Naive thymus-derived CD4-positive, alpha-beta T cell (primary cell): ENCODE measurements at regions of chr5 and their contacts with region 1.

Region 1: DNA sequence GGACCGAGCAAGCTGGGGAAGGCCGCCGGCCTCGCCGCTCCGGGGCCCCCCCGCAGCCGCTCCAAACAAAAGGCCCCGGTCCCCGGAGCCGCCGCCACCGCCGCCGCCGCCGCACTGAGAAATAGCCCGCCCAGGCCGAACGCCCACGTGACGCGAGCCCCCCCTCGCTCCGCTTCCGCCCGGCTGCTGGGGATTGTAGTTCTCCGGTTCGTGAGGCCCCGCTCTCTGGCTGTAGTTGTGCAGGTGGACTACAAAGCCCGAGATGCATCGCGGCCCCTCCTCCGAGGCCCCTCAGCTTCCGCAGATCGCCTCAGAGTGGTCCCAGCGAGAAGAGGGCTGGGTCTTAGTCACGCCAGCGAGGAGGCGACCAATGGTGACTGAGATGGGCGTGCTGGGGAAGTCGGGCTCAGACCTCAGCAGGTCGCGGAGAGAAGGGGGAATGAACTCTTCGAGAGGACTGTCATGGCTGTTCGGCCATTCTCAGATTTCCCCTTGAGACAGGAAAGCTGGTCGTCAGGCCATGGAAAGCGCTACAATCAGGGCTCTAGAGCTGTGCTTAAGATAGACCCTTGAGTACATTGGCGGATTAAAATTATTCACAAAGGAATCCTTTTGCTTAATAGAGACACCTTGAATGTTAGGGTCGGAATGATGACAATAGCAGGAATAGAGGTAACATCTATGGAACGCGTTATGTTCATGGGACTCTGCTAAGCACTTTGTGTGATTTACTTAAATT is 489 bp upstream of the PANK3 start:
- DNase-seq: peak; percentile 90 to 96 (median 95)
- ATAC-seq: peak; percentile 98
- H3K4me3 ChIP-seq: peak overlapping the region; percentile 79
- H3K4me3 Mint-ChIP-seq: peak overlapping the region; percentile 88 to 100 (median 94)
- H3K27ac ChIP-seq: peak overlapping the region; percentile 83
- H3K27ac Mint-ChIP-seq: peak overlapping the region; percentile 87 to 100 (median 97)
- H3K4me1 ChIP-seq: peaks cover 0 to 16% of the 10 kb centered on the region in 2 donors
- H3K4me1 Mint-ChIP-seq: peaks cover 19 to 48% (median 44%) of the 10 kb centered on the region in 7 donors
- H3K27me3 ChIP-seq: no peaks in the 10 kb centered on the region
- H3K27me3 Mint-ChIP-seq: peaks cover 0 to 4% (median 0%) of the 10 kb centered on the region in 5 donors

Region 2: DNA sequence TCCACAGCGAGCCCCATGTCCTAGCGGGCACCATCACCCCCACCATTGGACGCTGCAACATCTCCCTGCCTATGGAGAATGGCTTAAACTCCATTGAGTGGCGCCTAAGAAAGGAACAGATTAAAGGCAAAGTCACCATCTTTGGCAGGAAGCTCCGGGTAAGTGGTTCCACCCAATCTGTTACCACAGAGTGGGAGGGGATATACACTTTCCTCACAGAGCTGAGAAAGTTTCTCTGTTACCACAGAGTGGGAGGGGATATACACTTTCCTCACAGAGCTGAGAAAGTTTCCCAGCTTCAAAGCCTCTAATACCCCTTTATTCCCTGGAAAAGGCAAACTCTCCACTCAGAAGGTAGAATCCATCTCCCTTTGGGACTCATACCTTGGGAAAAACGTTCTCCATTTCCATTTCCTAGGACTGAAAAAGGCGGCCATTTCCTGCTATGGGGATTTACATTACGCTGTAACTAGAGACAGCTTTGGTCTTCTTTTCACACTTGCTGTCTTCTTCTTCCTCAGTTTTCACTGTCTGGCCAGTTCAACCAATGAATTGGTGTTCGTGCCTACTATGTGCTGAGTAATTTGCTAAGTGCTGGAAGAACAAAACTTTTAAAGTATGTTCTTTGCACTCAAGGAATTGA is 351.6 kb before region 1 on chr5:
- CTCF ChIA-PET with region 1: no interaction called
- POLR2A ChIA-PET with region 1: no interaction called
- intact Hi-C with region 1: loop called (anchors 1 to 5 kb)
- DNase-seq: peak in 5 of 9 donors; percentile 26 to 51 (median 45)
- ATAC-seq: peak; percentile 97
- H3K4me3 ChIP-seq: no peak overlapping the region
- H3K4me3 Mint-ChIP-seq: peak overlapping the region in 7 of 10 donors; percentile 17 to 68 (median 58)
- H3K27ac ChIP-seq: peak overlapping the region; percentile 46
- H3K27ac Mint-ChIP-seq: peak overlapping the region in 4 of 9 donors; percentile 3 to 75 (median 62)
- H3K4me1 ChIP-seq: peaks cover 0 to 3% of the 10 kb centered on the region in 2 donors
- H3K4me1 Mint-ChIP-seq: peaks cover 0 to 31% (median 23%) of the 10 kb centered on the region in 7 donors
- H3K27me3 ChIP-seq: no peaks in the 10 kb centered on the region
- H3K27me3 Mint-ChIP-seq: peaks cover 0 to 19% (median 10%) of the 10 kb centered on the region in 5 donors

Region 3: DNA sequence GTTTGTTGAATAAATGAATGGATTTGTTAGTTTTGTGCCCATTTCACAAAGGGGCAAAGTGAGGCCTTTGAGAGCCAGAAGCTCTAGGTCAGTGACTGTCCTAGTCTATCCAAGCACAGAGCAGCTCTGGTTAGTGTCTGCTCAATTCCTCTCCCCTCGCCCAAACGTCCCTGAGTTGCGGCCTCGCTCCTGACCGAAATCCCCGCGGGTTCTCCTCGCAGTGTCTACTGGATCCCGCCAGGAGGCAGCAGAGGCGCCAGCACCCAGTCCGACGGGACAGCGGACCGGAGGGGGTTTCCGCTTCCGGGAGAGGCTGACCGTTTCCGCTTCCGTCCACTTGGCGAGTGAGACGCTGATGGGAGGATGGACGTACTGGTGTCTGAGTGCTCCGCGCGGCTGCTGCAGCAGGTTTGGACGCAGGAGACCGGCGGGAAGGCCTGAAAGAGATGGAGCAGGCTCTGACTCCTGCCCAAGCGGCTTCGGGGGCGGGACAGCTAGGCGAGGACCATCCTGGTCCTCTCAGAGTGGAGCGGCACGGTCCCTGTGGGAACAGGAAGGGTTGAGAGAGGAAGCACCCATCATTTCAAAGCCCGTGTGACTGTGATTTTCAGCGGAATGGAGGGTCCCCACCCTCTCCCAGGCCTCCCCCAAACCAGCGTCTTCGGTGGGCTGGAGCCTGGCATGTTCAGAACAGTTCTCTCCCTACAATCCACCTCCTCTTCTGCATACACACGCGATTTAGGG is 93.3 kb before region 1 on chr5 and contains the start of gene RARS1:
- CTCF ChIA-PET with region 1: no interaction called
- POLR2A ChIA-PET with region 1: interaction called, 16 read pairs
- intact Hi-C with region 1: loop called (anchors 1 kb)
- DNase-seq: peak; percentile 65 to 89 (median 76)
- ATAC-seq: peak; percentile 98
- H3K4me3 ChIP-seq: peak within 1 kb of the TSS; percentile 93
- H3K4me3 Mint-ChIP-seq: peak within 1 kb of the TSS; percentile 96 to 100 (median 99)
- H3K27ac ChIP-seq: peak within 1 kb of the TSS; percentile 73
- H3K27ac Mint-ChIP-seq: peak within 1 kb of the TSS; percentile 88 to 96 (median 92)
- H3K4me1 ChIP-seq: peaks cover 7% of the 10 kb centered on the region in 2 donors
- H3K4me1 Mint-ChIP-seq: peaks cover 30 to 52% (median 44%) of the 10 kb centered on the region in 7 donors
- H3K27me3 ChIP-seq: no peaks in the 10 kb centered on the region
- H3K27me3 Mint-ChIP-seq: peaks cover 0 to 3% (median 0%) of the 10 kb centered on the region in 5 donors
- total RNA-seq, gene RARS1: 59.1 to 110 (median 81.3) TPM

Region 4: DNA sequence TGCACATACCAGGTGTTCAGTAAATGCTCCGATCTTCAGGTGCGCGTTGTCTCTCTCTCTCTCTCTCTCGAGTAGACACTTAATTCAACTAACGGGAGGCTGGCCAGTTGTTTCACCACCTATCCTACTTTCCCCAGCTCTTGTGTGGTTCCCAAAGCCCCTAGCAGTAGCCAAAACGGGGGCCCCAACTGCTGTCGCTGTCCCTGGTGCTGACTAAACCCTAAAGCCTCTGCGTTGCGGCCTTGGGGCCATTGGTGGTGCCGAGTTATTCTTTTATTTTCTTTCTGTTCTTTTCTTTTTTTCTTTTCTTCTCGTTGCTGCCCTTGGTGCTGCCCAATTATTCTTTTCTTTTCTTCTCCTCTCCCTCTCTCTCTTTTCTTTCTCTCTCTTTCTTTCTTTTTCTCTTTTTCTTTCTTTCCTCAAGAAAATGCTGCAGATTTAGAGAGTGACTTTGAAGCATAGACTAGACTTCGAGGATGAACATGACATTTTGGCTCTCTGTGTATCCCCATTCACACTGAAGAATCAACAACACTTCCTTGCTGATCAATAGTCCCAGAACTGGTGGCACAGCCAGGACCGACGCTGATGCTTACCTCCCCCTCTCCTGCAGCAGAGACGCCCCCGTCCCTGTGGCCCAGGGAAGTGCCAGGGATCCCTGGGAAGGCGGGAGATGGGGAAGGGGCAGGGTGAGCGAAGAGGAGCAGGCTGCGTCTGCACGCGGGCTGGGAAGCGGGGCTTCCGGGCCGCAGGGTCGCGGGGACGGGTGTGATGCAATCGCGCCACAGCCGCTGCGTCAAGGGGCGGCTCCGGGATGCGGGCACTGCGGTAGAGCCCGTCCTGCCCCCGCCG is 50.9 kb before region 1 on chr5 and contains the start of gene FBLL1:
- CTCF ChIA-PET with region 1: no interaction called
- POLR2A ChIA-PET with region 1: no interaction called
- intact Hi-C with region 1: loop called in 1 of 2 experiments (anchors 2 kb)
- DNase-seq: peak in 4 of 9 donors; percentile 1 to 35 (median 14)
- ATAC-seq: no peak
- H3K4me3 ChIP-seq: peak within 1 kb of the TSS; percentile 47
- H3K4me3 Mint-ChIP-seq: peak within 1 kb of the TSS; percentile 59 to 88 (median 72)
- H3K27ac ChIP-seq: no peak within 1 kb of the TSS
- H3K27ac Mint-ChIP-seq: peak within 1 kb of the TSS in 2 of 9 donors; percentile 22 to 38
- H3K4me1 ChIP-seq: no peaks in the 10 kb centered on the region
- H3K4me1 Mint-ChIP-seq: peaks cover 4 to 18% (median 14%) of the 10 kb centered on the region in 7 donors
- H3K27me3 ChIP-seq: peaks cover 0 to 18% of the 10 kb centered on the region in 2 donors
- H3K27me3 Mint-ChIP-seq: peaks cover 26 to 50% (median 42%) of the 10 kb centered on the region in 5 donors
- total RNA-seq, gene FBLL1: 0.22 to 0.57 TPM in 2 of 5 experiments, not detected in the others

Region 5: GRCh38 chr5:168654211-168654721 is 74.6 kb after region 1 on chr5:
- CTCF ChIA-PET with region 1: no interaction called
- POLR2A ChIA-PET with region 1: no interaction called
- intact Hi-C with region 1: no loop called
- DNase-seq: no peak
- ATAC-seq: no peak
- H3K4me3 ChIP-seq: no peak overlapping the region
- H3K4me3 Mint-ChIP-seq: no peak overlapping the region
- H3K27ac ChIP-seq: no peak overlapping the region
- H3K27ac Mint-ChIP-seq: peak overlapping the region in 1 of 9 donors; percentile 23
- H3K4me1 ChIP-seq: no peaks in the 10 kb centered on the region
- H3K4me1 Mint-ChIP-seq: no peaks in the 10 kb centered on the region
- H3K27me3 ChIP-seq: no peaks in the 10 kb centered on the region
- H3K27me3 Mint-ChIP-seq: peaks cover 0 to 6% (median 4%) of the 10 kb centered on the region in 5 donors

Region 6: GRCh38 chr5:168679515-168679920 is 99.9 kb after region 1 on chr5:
- CTCF ChIA-PET with region 1: no interaction called
- POLR2A ChIA-PET with region 1: interaction called, 5 read pairs
- intact Hi-C with region 1: loop called in 1 of 2 experiments (anchors 5 kb)
- DNase-seq: peak; percentile 11 to 59 (median 47)
- ATAC-seq: peak; percentile 55
- H3K4me3 ChIP-seq: no peak overlapping the region
- H3K4me3 Mint-ChIP-seq: no peak overlapping the region
- H3K27ac ChIP-seq: no peak overlapping the region
- H3K27ac Mint-ChIP-seq: no peak overlapping the region
- H3K4me1 ChIP-seq: peaks cover 0 to 5% of the 10 kb centered on the region in 2 donors
- H3K4me1 Mint-ChIP-seq: peaks cover 6 to 20% (median 14%) of the 10 kb centered on the region in 7 donors
- H3K27me3 ChIP-seq: no peaks in the 10 kb centered on the region
- H3K27me3 Mint-ChIP-seq: peaks cover 0 to 6% (median 0%) of the 10 kb centered on the region in 5 donors

Region 7: DNA sequence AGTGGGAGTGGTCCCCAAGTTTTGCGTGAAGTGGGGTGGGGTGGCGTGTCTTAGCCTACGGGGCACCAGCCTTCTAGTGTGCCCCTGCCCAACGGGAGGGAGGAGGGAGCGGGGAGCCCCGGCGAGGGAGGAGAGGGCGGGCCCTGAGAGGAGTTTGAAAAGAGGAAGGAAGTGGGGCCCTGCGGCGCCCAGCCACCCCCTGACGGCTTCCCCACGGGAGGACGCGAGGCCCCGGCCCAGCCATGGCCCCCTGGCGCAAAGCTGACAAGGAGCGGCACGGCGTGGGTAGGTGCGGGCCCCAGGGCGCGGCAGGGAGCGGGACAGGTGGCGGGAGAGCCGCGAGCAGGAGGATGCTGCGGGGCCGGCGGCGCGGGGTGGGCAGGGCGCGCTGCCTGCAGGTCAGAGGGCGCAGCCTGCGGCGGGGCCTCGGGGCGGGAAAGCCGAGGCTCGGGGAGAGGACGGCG is 1057.5 kb after region 1 on chr5 and contains the start of gene DOCK2:
- CTCF ChIA-PET with region 1: no interaction called
- POLR2A ChIA-PET with region 1: interaction called, 4 read pairs
- intact Hi-C with region 1: loop called (anchors 1 kb)
- DNase-seq: peak; percentile 54 to 72 (median 62)
- ATAC-seq: peak; percentile 88
- H3K4me3 ChIP-seq: peak within 1 kb of the TSS; percentile 97
- H3K4me3 Mint-ChIP-seq: peak within 1 kb of the TSS; percentile 91 to 95 (median 94)
- H3K27ac ChIP-seq: peak within 1 kb of the TSS; percentile 75
- H3K27ac Mint-ChIP-seq: peak within 1 kb of the TSS; percentile 88 to 98 (median 94)
- H3K4me1 ChIP-seq: peaks cover 19 to 38% of the 10 kb centered on the region in 2 donors
- H3K4me1 Mint-ChIP-seq: peaks cover 38 to 56% (median 48%) of the 10 kb centered on the region in 7 donors
- H3K27me3 ChIP-seq: no peaks in the 10 kb centered on the region
- H3K27me3 Mint-ChIP-seq: peaks cover 0 to 6% (median 0%) of the 10 kb centered on the region in 5 donors
- total RNA-seq, gene DOCK2: 182 to 345 (median 235) TPM